Gastrocnemius medialis (tissue), 4 donors: ENCODE measurements at regions of chr21 and their contacts with region 1.

Region 1: GRCh38 chr21:33127154-33127893 is 57.4 kb downstream of the OLIG1 start:
- DNase-seq: peak; percentile 27 to 39
- ATAC-seq: peak; percentile 63 to 90
- H3K4me3 ChIP-seq: peak overlapping the region in 3 of 4 donors; percentile 16 to 49 (median 39)
- H3K27ac ChIP-seq: no peak overlapping the region
- H3K4me1 ChIP-seq: no peaks in the 10 kb centered on the region
- H3K27me3 ChIP-seq: peaks cover 3 to 14% (median 4%) of the 10 kb centered on the region in 3 donors
- CTCF ChIP-seq: peak; percentile 39 to 77 (median 67)
- POLR2A ChIP-seq: no peak

Region 2: GRCh38 chr21:32826329-32827167 is 300.8 kb before region 1 on chr21:
- in situ Hi-C with region 1: loop called in 3 of 4 experiments (anchors 10 to 25 kb)
- intact Hi-C with region 1: loop called (anchors 5 kb)
- DNase-seq: no peak
- ATAC-seq: peak in 1 of 2 donors; percentile 27
- H3K4me3 ChIP-seq: no peak overlapping the region
- H3K27ac ChIP-seq: no peak overlapping the region
- H3K4me1 ChIP-seq: no peaks in the 10 kb centered on the region
- H3K27me3 ChIP-seq: no peaks in the 10 kb centered on the region
- CTCF ChIP-seq: peak in 2 of 5 experiments; percentile 10 to 22
- POLR2A ChIP-seq: no peak

Region 3: GRCh38 chr21:32834916-32835235 is 292.4 kb before region 1 on chr21:
- in situ Hi-C with region 1: loop called in 3 of 4 experiments (anchors 10 to 25 kb)
- intact Hi-C with region 1: loop called (anchors 5 kb)
- DNase-seq: no peak
- ATAC-seq: no peak
- H3K4me3 ChIP-seq: no peak overlapping the region
- H3K27ac ChIP-seq: no peak overlapping the region
- H3K4me1 ChIP-seq: no peaks in the 10 kb centered on the region
- H3K27me3 ChIP-seq: peaks cover 0 to 4% (median 0%) of the 10 kb centered on the region in 3 donors
- CTCF ChIP-seq: no peak
- POLR2A ChIP-seq: no peak

Region 4: GRCh38 chr21:32940079-32941014 is 187.0 kb before region 1 on chr21:
- in situ Hi-C with region 1: loop called in 2 of 4 experiments (anchors 5 to 10 kb)
- intact Hi-C with region 1: loop called (anchors 1 kb)
- DNase-seq: no peak
- ATAC-seq: peak in 1 of 2 donors; percentile 33
- H3K4me3 ChIP-seq: no peak overlapping the region
- H3K27ac ChIP-seq: no peak overlapping the region
- H3K4me1 ChIP-seq: no peaks in the 10 kb centered on the region
- H3K27me3 ChIP-seq: peaks cover 0 to 2% (median 0%) of the 10 kb centered on the region in 3 donors
- CTCF ChIP-seq: peak; percentile 34 to 77 (median 59)
- POLR2A ChIP-seq: no peak

Region 5: GRCh38 chr21:32994305-32994704 is 133.0 kb before region 1 on chr21:
- in situ Hi-C with region 1: no loop called
- intact Hi-C with region 1: loop called (anchors 1 kb)
- DNase-seq: no peak
- ATAC-seq: no peak
- H3K4me3 ChIP-seq: no peak overlapping the region
- H3K27ac ChIP-seq: no peak overlapping the region
- H3K4me1 ChIP-seq: no peaks in the 10 kb centered on the region
- H3K27me3 ChIP-seq: peaks cover 0 to 21% (median 6%) of the 10 kb centered on the region in 3 donors
- CTCF ChIP-seq: peak in 3 of 5 experiments; percentile 25 to 42 (median 40)
- POLR2A ChIP-seq: no peak

Region 6: GRCh38 chr21:34148826-34149558 is 1021.7 kb after region 1 on chr21:
- in situ Hi-C with region 1: no loop called
- intact Hi-C with region 1: no loop called
- DNase-seq: no peak
- ATAC-seq: no peak
- H3K4me3 ChIP-seq: no peak overlapping the region
- H3K27ac ChIP-seq: no peak overlapping the region
- H3K4me1 ChIP-seq: peaks cover 0 to 4% of the 10 kb centered on the region in 2 donors
- H3K27me3 ChIP-seq: no peaks in the 10 kb centered on the region
- CTCF ChIP-seq: no peak
- POLR2A ChIP-seq: no peak